B cell (primary cell): ENCODE measurements at regions of chr1 and their contacts with region 1.

Region 1: GRCh38 chr1:226547754-226548191 is 791 bp upstream of the STUM start:
- DNase-seq: peak; percentile 83
- ATAC-seq: peak; percentile 80
- H3K4me3 ChIP-seq: peak overlapping the region in 3 of 5 experiments; percentile 34 to 51 (median 35)
- H3K4me3 Mint-ChIP-seq: peak overlapping the region; percentile 59
- H3K27ac ChIP-seq: no peak overlapping the region
- H3K27ac Mint-ChIP-seq: no peak overlapping the region
- H3K4me1 ChIP-seq: peaks cover 22 to 24% of the 10 kb centered on the region in 2 donors
- H3K4me1 Mint-ChIP-seq: peaks cover 21% of the 10 kb centered on the region
- H3K27me3 ChIP-seq: peaks cover 0 to 33% (median 4%) of the 10 kb centered on the region in 4 experiments
- H3K27me3 Mint-ChIP-seq: peaks cover 17% of the 10 kb centered on the region
- CTCF ChIP-seq: peak; percentile 88

Region 2: GRCh38 chr1:226569879-226570547 is 22.2 kb after region 1 on chr1:
- CTCF ChIA-PET with region 1: interaction called, 10 read pairs
- POLR2A ChIA-PET with region 1: no interaction called
- intact Hi-C with region 1: no loop called
- DNase-seq: peak; percentile 42
- ATAC-seq: peak; percentile 80
- H3K4me3 ChIP-seq: no peak overlapping the region
- H3K4me3 Mint-ChIP-seq: no peak overlapping the region
- H3K27ac ChIP-seq: no peak overlapping the region
- H3K27ac Mint-ChIP-seq: no peak overlapping the region
- H3K4me1 ChIP-seq: no peaks in the 10 kb centered on the region
- H3K4me1 Mint-ChIP-seq: peaks cover 12% of the 10 kb centered on the region
- H3K27me3 ChIP-seq: peaks cover 0 to 3% (median 0%) of the 10 kb centered on the region in 4 experiments
- H3K27me3 Mint-ChIP-seq: no peaks in the 10 kb centered on the region
- CTCF ChIP-seq: peak; percentile 18

Region 3: GRCh38 chr1:226608699-226609505 is 61.1 kb after region 1 on chr1:
- CTCF ChIA-PET with region 1: interaction called, 9 read pairs
- POLR2A ChIA-PET with region 1: no interaction called
- intact Hi-C with region 1: loop called (anchors 2 kb)
- DNase-seq: peak; percentile 76
- ATAC-seq: peak; percentile 78
- H3K4me3 ChIP-seq: no peak overlapping the region
- H3K4me3 Mint-ChIP-seq: no peak overlapping the region
- H3K27ac ChIP-seq: no peak overlapping the region
- H3K27ac Mint-ChIP-seq: no peak overlapping the region
- H3K4me1 ChIP-seq: no peaks in the 10 kb centered on the region
- H3K4me1 Mint-ChIP-seq: peaks cover 2% of the 10 kb centered on the region
- H3K27me3 ChIP-seq: peaks cover 0 to 3% (median 0%) of the 10 kb centered on the region in 4 experiments
- H3K27me3 Mint-ChIP-seq: peaks cover 6% of the 10 kb centered on the region
- CTCF ChIP-seq: peak; percentile 97

Region 4: GRCh38 chr1:226870401-226871279 is 322.9 kb after region 1 on chr1 and contains the start of gene PSEN2:
- CTCF ChIA-PET with region 1: no interaction called
- POLR2A ChIA-PET with region 1: no interaction called
- intact Hi-C with region 1: no loop called
- DNase-seq: peak; percentile 76
- ATAC-seq: peak; percentile 96
- H3K4me3 ChIP-seq: peak within 1 kb of the TSS in 4 of 5 experiments; percentile 50 to 85 (median 72)
- H3K4me3 Mint-ChIP-seq: peak within 1 kb of the TSS; percentile 88
- H3K27ac ChIP-seq: peak within 1 kb of the TSS in 1 of 2 donors; percentile 67
- H3K27ac Mint-ChIP-seq: peak within 1 kb of the TSS; percentile 67
- H3K4me1 ChIP-seq: peaks cover 10 to 16% of the 10 kb centered on the region in 2 donors
- H3K4me1 Mint-ChIP-seq: peaks cover 20% of the 10 kb centered on the region
- H3K27me3 ChIP-seq: peaks cover 0 to 3% (median 0%) of the 10 kb centered on the region in 4 experiments
- H3K27me3 Mint-ChIP-seq: no peaks in the 10 kb centered on the region
- CTCF ChIP-seq: no peak
- total RNA-seq, gene PSEN2: 26.0 and 29.9 TPM in 2 replicates

Region 5: DNA sequence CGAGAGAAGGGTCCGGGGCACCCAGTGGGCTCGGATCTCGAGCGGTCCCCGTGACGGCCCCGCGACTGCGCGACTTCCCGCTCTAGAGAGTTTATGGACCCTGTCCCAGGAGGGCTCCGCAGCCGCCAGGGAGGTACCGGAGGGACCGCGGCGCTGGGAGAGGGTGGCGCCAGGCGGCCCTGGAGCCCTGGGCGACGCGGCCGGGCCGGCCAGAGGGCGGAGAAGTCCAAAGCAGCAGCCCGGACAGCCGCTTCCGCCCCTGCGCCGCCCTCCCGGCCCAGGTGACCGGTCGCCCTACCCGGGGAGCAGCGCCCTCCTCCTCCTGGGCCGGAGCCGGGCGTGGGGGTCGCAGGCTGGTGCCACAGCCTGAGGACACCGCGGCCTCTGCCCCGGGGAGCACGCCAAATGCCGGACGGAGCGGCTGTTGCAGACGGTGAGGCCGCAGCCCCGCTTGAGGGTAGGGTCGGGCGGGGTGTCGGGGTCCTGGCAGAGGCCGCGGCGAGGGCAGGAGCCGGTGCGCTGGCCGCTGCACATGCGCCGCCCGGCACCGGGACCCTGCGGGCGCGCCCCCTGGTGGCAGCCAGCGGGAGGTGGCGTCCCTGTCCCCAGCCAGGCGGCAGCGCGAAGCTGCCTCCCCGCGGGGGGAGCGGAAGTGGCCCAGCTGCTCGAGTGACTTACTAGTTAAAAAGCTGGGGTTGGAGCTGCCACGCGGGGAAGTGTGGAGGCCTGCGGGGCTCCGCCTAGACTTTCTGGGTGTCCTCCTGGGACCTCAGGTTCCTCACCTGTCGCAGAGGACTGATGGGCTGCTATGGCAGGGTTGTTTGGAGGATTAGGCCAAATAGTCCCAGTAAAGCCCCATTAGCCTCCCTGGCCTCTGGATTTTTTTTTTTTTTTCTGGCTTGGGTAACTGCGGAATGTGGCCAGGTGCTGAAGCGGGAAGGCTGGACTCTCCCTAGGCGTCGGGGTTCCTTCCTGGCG is 994.7 kb after region 1 on chr1:
- CTCF ChIA-PET with region 1: interaction called, 3 read pairs
- POLR2A ChIA-PET with region 1: no interaction called
- intact Hi-C with region 1: loop called (anchors 5 kb)
- DNase-seq: peak; percentile 89
- ATAC-seq: peak; percentile 96
- H3K4me3 ChIP-seq: peak overlapping the region; percentile 7 to 69 (median 63)
- H3K4me3 Mint-ChIP-seq: peak overlapping the region; percentile 73
- H3K27ac ChIP-seq: peak overlapping the region in 1 of 2 donors; percentile 16
- H3K27ac Mint-ChIP-seq: no peak overlapping the region
- H3K4me1 ChIP-seq: peaks cover 0 to 16% of the 10 kb centered on the region in 2 donors
- H3K4me1 Mint-ChIP-seq: peaks cover 3% of the 10 kb centered on the region
- H3K27me3 ChIP-seq: no peaks in the 10 kb centered on the region
- H3K27me3 Mint-ChIP-seq: no peaks in the 10 kb centered on the region
- CTCF ChIP-seq: peak; percentile 99